Astrocyte of the cerebellum (primary cell): ENCODE measurements at regions of chr2 and their contacts with region 1.

Region 1: GRCh38 chr2:65545837-65546805 is 113.7 kb upstream of the SPRED2 start:
- DNase-seq: no peak
- H3K4me3 ChIP-seq: no peak overlapping the region
- CTCF ChIP-seq: no peak

Region 2: GRCh38 chr2:65278531-65278981 is 267.6 kb before region 1 on chr2:
- in situ Hi-C with region 1: loop called (anchors 25 kb)
- DNase-seq: no peak
- H3K4me3 ChIP-seq: no peak overlapping the region
- CTCF ChIP-seq: no peak